ENCODE measurements at regions of chr20 and their contacts with region 1.

Region 1: GRCh38 chr20:50194831-50195755 is 4.5 kb downstream of the CEBPB start:
- DNase-seq: no peak
- H3K4me3 ChIP-seq: peak overlapping the region; percentile 1
- H3K27ac ChIP-seq: no peak overlapping the region
- H3K27me3 ChIP-seq: no peaks in the 10 kb centered on the region
- CTCF ChIP-seq: no peak

Region 2: DNA sequence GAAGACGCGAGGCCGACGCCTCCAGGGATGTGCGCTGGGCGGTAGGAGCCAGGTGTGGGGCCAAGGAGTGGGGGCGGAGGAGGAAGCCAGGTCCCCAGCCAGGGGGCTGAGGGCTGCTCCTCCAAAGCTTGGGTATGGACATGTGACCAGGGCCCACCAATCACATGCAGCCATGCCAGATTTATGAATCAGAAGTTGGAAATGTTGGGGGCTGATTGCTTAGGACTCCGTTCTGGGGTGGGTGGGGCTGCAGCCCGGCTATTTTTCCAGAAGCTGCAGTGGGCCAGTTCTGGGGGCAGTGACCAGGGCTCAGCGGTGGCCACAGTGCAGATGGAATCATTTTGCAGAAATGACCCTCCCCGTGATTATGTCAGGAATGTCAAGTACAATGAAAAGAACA is 91.5 kb after region 1 on chr20:
- in situ Hi-C with region 1: loop called (anchors 5 kb)
- DNase-seq: peak; percentile 84
- H3K4me3 ChIP-seq: no peak overlapping the region
- H3K27ac ChIP-seq: peak overlapping the region; percentile 64
- H3K27me3 ChIP-seq: no peaks in the 10 kb centered on the region
- CTCF ChIP-seq: no peak

Measured in brain microvascular endothelial cell (primary cell).